PC-9 (cell line): ENCODE measurements at regions of chr1 and their contacts with region 1.

Region 1: GRCh38 chr1:218345673-218346390 is 696 bp downstream of the TGFB2 start:
- DNase-seq: peak; percentile 51 to 64
- H3K4me3 ChIP-seq: peak overlapping the region; percentile 98
- H3K27ac ChIP-seq: peak overlapping the region; percentile 85
- H3K4me1 ChIP-seq: peaks cover 40% of the 10 kb centered on the region
- H3K27me3 ChIP-seq: no peaks in the 10 kb centered on the region
- CTCF ChIP-seq: no peak

Region 2: GRCh38 chr1:218377143-218377660 is 31.4 kb after region 1 on chr1:
- CTCF ChIA-PET with region 1: no interaction called
- POLR2A ChIA-PET with region 1: interaction called, 40 read pairs
- intact Hi-C with region 1: loop called (anchors 1 kb)
- DNase-seq: peak; percentile 87 to 96
- H3K4me3 ChIP-seq: peak overlapping the region; percentile 36
- H3K27ac ChIP-seq: peak overlapping the region; percentile 91
- H3K4me1 ChIP-seq: peaks cover 80% of the 10 kb centered on the region
- H3K27me3 ChIP-seq: no peaks in the 10 kb centered on the region
- CTCF ChIP-seq: no peak

Region 3: DNA sequence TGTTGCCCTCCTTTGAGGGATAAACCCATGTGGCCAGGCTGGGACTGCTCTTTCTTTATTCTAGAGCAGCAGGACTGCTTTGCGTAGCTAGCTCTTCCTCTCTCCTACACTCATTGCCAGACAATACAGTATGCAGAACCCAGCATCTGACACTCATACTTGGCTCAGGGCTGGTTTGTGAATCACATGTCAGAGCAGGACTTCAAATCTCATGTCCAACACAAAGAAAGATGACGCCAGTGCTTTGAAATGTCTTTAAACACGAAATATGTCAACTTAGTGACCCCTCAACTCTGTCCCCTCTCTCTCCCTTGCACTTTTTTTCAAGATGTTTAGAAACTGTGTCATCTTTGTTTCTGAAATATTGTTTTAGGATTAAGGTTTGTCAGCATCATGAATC is 134.3 kb after region 1 on chr1:
- CTCF ChIA-PET with region 1: no interaction called
- POLR2A ChIA-PET with region 1: interaction called, 16 read pairs
- intact Hi-C with region 1: no loop called
- DNase-seq: no peak
- H3K4me3 ChIP-seq: no peak overlapping the region
- H3K27ac ChIP-seq: peak overlapping the region; percentile 77
- H3K4me1 ChIP-seq: peaks cover 41% of the 10 kb centered on the region
- H3K27me3 ChIP-seq: no peaks in the 10 kb centered on the region
- CTCF ChIP-seq: no peak

Region 4: DNA sequence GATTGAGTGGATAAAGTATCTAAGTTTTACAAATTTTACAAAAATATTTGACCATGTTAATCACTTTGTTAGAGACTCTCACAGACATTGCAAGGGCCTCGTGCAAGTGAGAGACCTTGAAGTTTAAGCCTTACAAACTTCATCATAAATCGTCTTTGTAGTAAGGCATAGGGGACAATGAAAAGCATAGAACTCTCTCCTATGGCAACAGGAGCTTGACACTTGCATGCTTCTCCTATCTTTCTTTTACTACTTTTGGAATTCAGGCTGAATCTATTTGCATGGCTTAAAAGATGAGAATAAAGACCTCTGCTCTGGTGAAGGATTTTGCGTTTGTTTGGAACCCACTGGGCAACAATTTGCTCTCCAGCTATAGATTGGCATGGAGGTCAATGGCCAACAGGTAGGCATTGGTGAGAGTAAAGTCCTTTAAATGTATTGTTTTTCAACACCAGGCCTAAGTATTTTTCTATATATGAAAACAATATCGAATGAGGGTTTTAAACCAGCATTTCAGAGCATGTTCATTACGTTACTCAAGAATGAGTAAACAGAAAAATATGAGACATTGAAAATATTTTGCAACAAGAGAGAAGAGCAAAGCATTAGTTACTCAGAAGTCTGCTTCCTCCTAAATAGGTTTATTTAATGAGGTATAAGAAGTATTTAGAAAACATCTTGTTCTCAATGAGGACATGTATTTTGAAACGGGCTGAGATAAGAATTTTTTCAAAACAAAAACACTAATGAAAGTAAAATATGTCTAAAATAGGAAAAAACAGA is 191.5 kb after region 1 on chr1:
- CTCF ChIA-PET with region 1: no interaction called
- POLR2A ChIA-PET with region 1: interaction called, 12 read pairs
- intact Hi-C with region 1: no loop called
- DNase-seq: peak in 1 of 2 experiments; percentile 80
- H3K4me3 ChIP-seq: no peak overlapping the region
- H3K27ac ChIP-seq: peak overlapping the region; percentile 67
- H3K4me1 ChIP-seq: peaks cover 24% of the 10 kb centered on the region
- H3K27me3 ChIP-seq: no peaks in the 10 kb centered on the region
- CTCF ChIP-seq: no peak

Region 5: DNA sequence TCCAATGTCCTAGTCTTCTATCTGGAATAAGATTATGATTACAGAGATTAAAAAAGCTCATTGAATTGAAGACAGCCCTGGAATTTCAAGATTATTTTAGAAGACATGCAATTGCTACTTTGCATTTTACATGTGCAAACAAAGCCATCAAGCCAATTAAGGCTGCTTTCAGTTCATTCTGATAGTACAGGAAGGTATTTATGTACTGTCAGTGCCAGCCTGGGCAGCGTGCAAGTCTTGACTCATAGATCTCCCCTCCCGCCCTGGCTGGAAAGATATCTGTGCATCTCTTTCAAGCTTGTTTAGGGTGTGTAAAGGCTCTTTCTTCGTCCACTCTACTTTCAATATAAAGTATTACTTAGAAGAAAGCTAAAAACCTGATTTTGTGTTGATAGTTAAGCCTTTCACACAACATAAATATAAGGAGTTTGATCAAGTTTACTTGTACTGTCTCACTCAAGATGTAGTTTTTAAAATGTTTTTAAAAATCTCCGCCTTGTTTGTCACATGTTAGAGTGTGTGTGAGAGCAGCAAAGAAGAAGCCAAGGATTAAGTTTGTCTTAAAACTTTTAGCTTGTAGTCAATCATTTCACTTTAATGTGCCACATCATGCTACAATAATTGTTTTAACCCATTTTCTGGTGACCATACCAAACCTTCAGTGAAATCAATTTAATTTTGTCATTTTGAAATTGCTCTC is 814.3 kb after region 1 on chr1:
- CTCF ChIA-PET with region 1: no interaction called
- POLR2A ChIA-PET with region 1: interaction called, 14 read pairs
- intact Hi-C with region 1: no loop called
- DNase-seq: no peak
- H3K4me3 ChIP-seq: no peak overlapping the region
- H3K27ac ChIP-seq: no peak overlapping the region
- H3K4me1 ChIP-seq: no peaks in the 10 kb centered on the region
- H3K27me3 ChIP-seq: no peaks in the 10 kb centered on the region
- CTCF ChIP-seq: no peak

Region 6: DNA sequence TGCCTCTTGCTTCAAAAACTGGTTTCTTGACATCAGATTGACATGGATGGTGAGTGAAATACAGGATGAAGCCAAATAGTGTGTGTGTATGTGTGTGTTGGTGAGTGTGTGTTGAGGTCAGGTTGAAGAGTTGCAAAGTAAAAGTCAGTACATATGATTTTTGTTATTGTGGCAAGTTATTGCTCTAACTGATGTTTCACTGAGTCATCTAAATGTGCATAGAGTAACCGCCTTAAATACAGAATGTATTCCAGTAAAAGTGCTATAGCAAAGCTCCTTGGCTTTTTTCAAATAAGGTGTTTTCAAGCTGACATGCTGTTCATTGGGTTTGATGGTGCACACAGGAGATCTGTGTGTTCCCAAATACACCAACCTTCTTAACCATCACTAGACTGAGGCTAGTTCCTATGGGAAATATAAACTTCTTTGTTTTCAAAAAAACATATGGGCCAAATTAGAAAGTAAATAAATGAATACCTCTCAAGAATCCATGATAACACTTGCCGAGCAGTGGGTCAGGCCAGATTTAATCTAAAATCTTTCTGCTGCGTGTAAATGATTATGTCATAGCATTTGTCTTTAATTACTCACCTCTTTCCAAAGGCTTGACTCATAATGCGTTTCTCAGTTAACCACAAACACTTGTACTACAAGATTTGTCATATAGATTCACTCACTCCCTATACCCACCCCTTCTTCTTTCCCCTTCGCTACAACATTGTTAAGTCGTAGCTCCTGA is 979.0 kb after region 1 on chr1:
- CTCF ChIA-PET with region 1: no interaction called
- POLR2A ChIA-PET with region 1: interaction called, 21 read pairs
- intact Hi-C with region 1: no loop called
- DNase-seq: peak; percentile 44 to 94
- H3K4me3 ChIP-seq: no peak overlapping the region; the same call in 1 of the 2 replicates
- H3K27ac ChIP-seq: peak overlapping the region; percentile 63
- H3K4me1 ChIP-seq: peaks cover 31% of the 10 kb centered on the region
- H3K27me3 ChIP-seq: no peaks in the 10 kb centered on the region
- CTCF ChIP-seq: no peak